Right lobe of liver (tissue), 6 donors: ENCODE measurements at regions of chr20 and their contacts with region 1.

Region 1: DNA sequence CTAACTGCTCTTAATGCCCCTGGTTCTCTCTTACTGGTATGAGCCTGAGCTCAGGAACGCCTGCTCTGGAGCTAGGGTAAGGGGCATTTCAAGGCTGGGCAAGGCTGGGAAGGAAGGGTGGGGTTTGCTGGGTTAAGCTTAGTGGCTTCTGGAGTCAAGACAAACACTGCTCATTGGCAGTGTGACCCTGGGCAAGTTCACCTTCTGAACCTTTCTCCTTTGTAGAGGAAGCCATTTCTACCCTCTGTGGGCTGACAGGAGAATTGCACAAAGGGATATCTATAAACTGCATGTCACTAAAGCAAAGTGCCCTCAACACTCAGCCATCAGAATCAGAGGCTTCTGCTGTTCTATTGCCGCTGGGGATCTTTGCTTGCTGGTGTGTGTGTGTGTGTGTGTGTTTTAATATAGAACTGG is 20.3 kb upstream of the LRRN4 start:
- DNase-seq: peak in 1 of 3 donors; percentile 57
- ATAC-seq: peak; percentile 82 to 88 (median 84)
- H3K4me3 ChIP-seq: no peak overlapping the region
- H3K27ac ChIP-seq: peak overlapping the region in 1 of 3 donors; percentile 67
- H3K4me1 ChIP-seq: peaks cover 0 to 53% (median 15%) of the 10 kb centered on the region in 4 donors
- H3K27me3 ChIP-seq: no peaks in the 10 kb centered on the region
- CTCF ChIP-seq: peak; percentile 47 to 56 (median 50)
- POLR2A ChIP-seq: no peak

Region 2: GRCh38 chr20:5529331-5530148 is 544.6 kb before region 1 on chr20:
- intact Hi-C with region 1: loop called in 1 of 2 experiments (anchors 10 kb)
- DNase-seq: peak; percentile 80 to 85 (median 84)
- ATAC-seq: peak; percentile 83 to 92 (median 92)
- H3K4me3 ChIP-seq: no peak overlapping the region
- H3K27ac ChIP-seq: no peak overlapping the region
- H3K4me1 ChIP-seq: peaks cover 0 to 4% (median 0%) of the 10 kb centered on the region in 4 donors
- H3K27me3 ChIP-seq: no peaks in the 10 kb centered on the region
- CTCF ChIP-seq: peak; percentile 45 to 75 (median 73)
- POLR2A ChIP-seq: no peak

Region 3: DNA sequence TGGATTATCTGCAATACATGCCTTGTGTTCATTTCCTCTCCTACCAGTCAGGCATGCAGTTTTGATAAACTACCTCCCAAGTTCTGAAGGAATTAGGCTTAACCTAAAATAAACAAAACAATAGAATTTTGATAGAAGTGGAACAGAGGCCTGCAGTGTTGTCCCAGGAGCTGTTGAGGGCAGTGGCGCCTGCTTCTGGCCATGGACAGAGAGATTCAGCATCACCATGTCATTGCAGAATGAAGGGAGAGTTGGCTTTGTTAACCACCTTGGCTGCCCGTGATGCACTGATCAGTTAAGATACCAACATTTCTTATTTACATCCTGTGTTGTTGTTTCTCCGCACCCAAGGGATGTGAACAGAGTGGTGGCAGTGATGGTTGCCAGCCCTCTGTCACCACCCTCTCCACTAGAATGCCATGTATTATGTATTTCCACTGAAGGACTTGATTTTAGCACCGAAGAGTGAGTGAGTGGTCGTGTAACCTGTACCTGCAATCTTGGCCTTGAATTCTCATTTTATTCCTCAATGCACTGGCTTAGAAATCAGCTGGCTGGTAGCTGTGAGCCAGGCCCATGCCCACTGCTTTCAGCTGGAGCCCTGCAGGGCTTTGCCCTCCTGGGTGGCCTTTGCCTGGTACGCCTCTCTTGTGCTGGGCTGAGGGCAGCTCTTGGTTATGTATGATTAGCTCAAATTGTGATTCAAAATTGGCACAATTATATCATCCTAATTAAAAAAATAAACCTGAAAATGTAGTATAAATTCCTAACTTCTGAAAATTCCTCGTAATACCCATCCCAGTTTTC is 267.5 kb before region 1 on chr20:
- intact Hi-C with region 1: loop called in 1 of 2 experiments (anchors 10 kb)
- DNase-seq: no peak
- ATAC-seq: no peak
- H3K4me3 ChIP-seq: no peak overlapping the region
- H3K27ac ChIP-seq: no peak overlapping the region
- H3K4me1 ChIP-seq: peaks cover 0 to 20% (median 10%) of the 10 kb centered on the region in 4 donors
- H3K27me3 ChIP-seq: no peaks in the 10 kb centered on the region
- CTCF ChIP-seq: no peak
- POLR2A ChIP-seq: no peak

Region 4: DNA sequence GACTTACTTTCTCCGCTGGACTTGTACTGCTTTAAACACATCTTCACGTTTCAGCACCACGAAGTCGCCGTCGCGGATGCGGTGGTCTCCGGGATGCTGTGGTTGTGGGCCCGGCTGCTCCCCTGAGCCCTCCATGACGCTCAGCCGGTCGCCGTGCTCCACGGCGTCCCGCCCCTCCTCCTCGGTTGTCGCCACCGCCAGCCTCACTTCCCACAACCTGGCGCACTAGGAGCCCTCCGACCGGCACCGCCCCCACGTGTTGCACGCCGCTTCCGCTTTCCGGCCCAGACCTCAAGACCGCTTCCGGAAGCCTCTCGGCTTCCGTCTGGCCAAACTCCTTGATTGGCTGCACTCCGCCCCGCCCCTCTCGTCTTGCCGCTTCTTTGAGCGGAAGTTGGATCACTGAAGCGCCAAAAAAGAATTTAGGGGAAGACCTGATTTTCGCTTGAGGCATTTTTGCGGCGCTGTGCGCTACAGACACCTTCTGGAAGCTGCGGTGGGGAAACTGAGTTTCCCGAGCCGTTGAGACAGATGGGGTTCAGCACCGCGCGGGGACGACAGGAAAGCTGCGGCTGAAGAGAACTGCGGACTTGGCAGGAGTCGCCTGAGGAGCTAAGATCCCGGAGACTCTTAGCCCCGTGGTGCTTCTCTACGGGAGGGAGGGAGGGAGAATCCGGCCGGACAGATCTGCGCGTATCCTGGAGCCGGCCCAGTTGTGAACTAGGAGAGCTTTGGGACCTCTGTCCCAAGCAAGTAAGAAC is 123.7 kb before region 1 on chr20 and contains the starts of genes MCM8 and TRMT6:
- intact Hi-C with region 1: no loop called
- DNase-seq: peak; percentile 96 to 97 (median 96)
- ATAC-seq: peak; percentile 100
- H3K4me3 ChIP-seq: peak within 1 kb of the TSS; percentile 86 to 98 (median 93)
- H3K27ac ChIP-seq: peak within 1 kb of the TSS in 1 of 3 donors; percentile 50
- H3K4me1 ChIP-seq: peaks cover 0 to 15% (median 2%) of the 10 kb centered on the region in 4 donors
- H3K27me3 ChIP-seq: no peaks in the 10 kb centered on the region
- CTCF ChIP-seq: no peak
- POLR2A ChIP-seq: peak; percentile 48
- total RNA-seq, gene MCM8: 1.4 to 2.5 (median 1.6) TPM
- total RNA-seq, gene TRMT6: 2.8 to 5.8 (median 4.3) TPM

Region 5: GRCh38 chr20:6466075-6466810 is 392.1 kb after region 1 on chr20:
- intact Hi-C with region 1: no loop called
- DNase-seq: peak in 1 of 3 donors; percentile 21
- ATAC-seq: peak; percentile 44 to 96 (median 68)
- H3K4me3 ChIP-seq: peak overlapping the region in 1 of 3 donors; percentile 16
- H3K27ac ChIP-seq: peak overlapping the region in 2 of 3 donors; percentile 16 to 24
- H3K4me1 ChIP-seq: no peaks in the 10 kb centered on the region
- H3K27me3 ChIP-seq: no peaks in the 10 kb centered on the region
- CTCF ChIP-seq: no peak
- POLR2A ChIP-seq: no peak